ENCODE measurements at regions of chr11 and their contacts with region 1.

Region 1: GRCh38 chr11:809287-810039 is at the start of gene RPLP2:
- DNase-seq: peak; percentile 99
- H3K4me3 Mint-ChIP-seq: peak within 1 kb of the TSS; percentile 94
- H3K27ac Mint-ChIP-seq: peak within 1 kb of the TSS; percentile 98
- H3K4me1 Mint-ChIP-seq: peaks cover 27% of the 10 kb centered on the region
- H3K27me3 Mint-ChIP-seq: no peaks in the 10 kb centered on the region
- total RNA-seq, gene RPLP2: 2,367 and 2,377 TPM in 2 replicates

Region 2: GRCh38 chr11:727859-728748 is 81.4 kb before region 1 on chr11:
- intact Hi-C with region 1: no loop called
- DNase-seq: peak; percentile 95
- H3K4me3 Mint-ChIP-seq: no peak overlapping the region
- H3K27ac Mint-ChIP-seq: no peak overlapping the region
- H3K4me1 Mint-ChIP-seq: peaks cover 8% of the 10 kb centered on the region
- H3K27me3 Mint-ChIP-seq: peaks cover 5% of the 10 kb centered on the region

Region 3: GRCh38 chr11:777288-778255 is 31.9 kb before region 1 on chr11 and contains the start of gene GATD1:
- intact Hi-C with region 1: loop called (anchors 1 kb)
- DNase-seq: peak; percentile 99
- H3K4me3 Mint-ChIP-seq: peak within 1 kb of the TSS; percentile 92
- H3K27ac Mint-ChIP-seq: peak within 1 kb of the TSS; percentile 85
- H3K4me1 Mint-ChIP-seq: peaks cover 18% of the 10 kb centered on the region
- H3K27me3 Mint-ChIP-seq: no peaks in the 10 kb centered on the region
- total RNA-seq, gene GATD1: 81.7 and 82.2 TPM in 2 replicates

Region 4: DNA sequence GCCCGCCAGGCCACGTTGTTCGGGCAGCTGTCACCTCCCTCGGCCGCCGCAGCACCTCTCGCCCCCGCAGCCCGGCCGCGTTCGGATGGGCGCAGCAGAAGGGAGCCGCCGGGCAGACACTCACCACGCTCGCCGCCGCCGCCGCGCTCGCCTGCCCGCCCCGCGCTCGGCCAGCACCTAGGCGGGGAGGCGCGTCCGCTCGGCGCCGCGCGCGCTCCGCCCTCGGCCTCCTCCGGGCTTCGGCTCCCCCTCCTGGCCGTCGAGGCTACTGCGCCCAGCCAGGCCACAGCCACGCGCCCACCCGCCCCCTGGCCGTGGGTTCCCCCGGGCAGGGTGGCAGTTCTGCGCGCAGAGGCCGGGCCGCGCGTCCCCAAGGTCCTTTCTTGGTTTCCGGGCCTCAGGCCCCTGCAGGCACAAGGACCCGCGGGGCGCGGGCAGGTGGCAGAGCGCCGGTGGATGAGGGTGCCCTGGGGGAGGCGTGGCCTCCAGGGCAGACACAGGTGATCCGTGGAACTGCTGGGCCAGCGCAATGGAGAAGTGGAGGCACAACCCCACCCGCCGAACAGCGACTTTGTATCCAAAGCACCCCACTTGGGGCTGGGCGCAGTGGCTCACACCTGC is 11.3 kb before region 1 on chr11 and contains the start of gene SLC25A22:
- intact Hi-C with region 1: loop called (anchors 1 kb)
- DNase-seq: peak; percentile 97
- H3K4me3 Mint-ChIP-seq: peak within 1 kb of the TSS; percentile 91
- H3K27ac Mint-ChIP-seq: peak within 1 kb of the TSS; percentile 87
- H3K4me1 Mint-ChIP-seq: peaks cover 7% of the 10 kb centered on the region
- H3K27me3 Mint-ChIP-seq: no peaks in the 10 kb centered on the region
- total RNA-seq, gene SLC25A22: 84.9 and 90.3 TPM in 2 replicates

Region 5: GRCh38 chr11:827146-827896 is 17.9 kb after region 1 on chr11:
- intact Hi-C with region 1: loop called (anchors 2 kb)
- DNase-seq: peak; percentile 84
- H3K4me3 Mint-ChIP-seq: peak overlapping the region; percentile 81
- H3K27ac Mint-ChIP-seq: peak overlapping the region; percentile 11
- H3K4me1 Mint-ChIP-seq: peaks cover 24% of the 10 kb centered on the region
- H3K27me3 Mint-ChIP-seq: peaks cover 42% of the 10 kb centered on the region

Region 6: DNA sequence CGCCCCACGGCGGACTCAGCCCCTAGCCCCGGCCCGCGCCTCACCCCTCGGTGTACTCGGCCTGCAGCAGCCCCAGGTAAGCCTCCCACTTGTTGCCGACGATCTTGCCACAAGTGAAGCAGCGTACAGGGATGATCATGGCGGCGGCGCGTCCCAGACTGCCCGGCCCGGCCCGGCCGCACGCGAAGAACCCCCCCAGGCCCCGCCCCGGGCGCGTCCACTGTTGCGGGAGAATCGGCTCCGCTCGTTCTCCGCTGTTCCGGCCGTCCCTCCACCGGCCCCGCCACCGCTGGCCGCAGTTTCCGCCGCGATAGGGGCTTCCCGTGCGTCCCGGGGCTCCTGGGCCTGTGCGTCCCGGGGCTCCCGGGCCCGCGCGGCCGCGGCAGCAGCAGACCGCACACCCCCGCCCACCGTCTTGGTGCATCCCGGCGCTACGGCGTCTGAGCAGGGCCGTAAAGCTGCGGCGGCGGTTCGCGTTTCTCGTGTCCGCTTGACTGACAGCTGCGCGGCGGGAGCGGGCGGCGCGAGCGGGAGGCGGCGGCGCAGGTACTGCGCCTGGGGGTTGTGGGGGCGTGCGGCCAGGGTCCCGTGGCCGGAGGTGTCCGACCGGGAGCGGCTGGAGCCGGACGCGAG is 33.0 kb after region 1 on chr11 and contains the starts of genes POLR2L and TSPAN4:
- intact Hi-C with region 1: loop called (anchors 2 kb)
- DNase-seq: peak; percentile 96
- H3K4me3 Mint-ChIP-seq: peak within 1 kb of the TSS; percentile 89
- H3K27ac Mint-ChIP-seq: peak within 1 kb of the TSS; percentile 85
- H3K4me1 Mint-ChIP-seq: peaks cover 19% of the 10 kb centered on the region
- H3K27me3 Mint-ChIP-seq: no peaks in the 10 kb centered on the region
- total RNA-seq, gene POLR2L: 113 and 117 TPM in 2 replicates
- total RNA-seq, gene TSPAN4: 14.8 and 15.1 TPM in 2 replicates